ENCODE measurements at regions of chr20 and their contacts with region 1.

Region 1: GRCh38 chr20:63009045-63009961 is 2.5 kb upstream of the BHLHE23 start:
- DNase-seq: peak; percentile 78 to 93 (median 85)
- ATAC-seq: peak; percentile 63
- H3K4me3 ChIP-seq: peak overlapping the region; percentile 54 to 55
- H3K4me3 Mint-ChIP-seq: peak overlapping the region; percentile 88
- H3K27ac ChIP-seq: no peak overlapping the region
- H3K27ac Mint-ChIP-seq: no peak overlapping the region
- H3K4me1 ChIP-seq: peaks cover 53% of the 10 kb centered on the region
- H3K4me1 Mint-ChIP-seq: peaks cover 25% of the 10 kb centered on the region
- H3K27me3 ChIP-seq: peaks cover 33 to 45% of the 10 kb centered on the region in 2 experiments
- H3K27me3 Mint-ChIP-seq: peaks cover 23% of the 10 kb centered on the region
- CTCF ChIP-seq: peak; percentile 91

Region 2: DNA sequence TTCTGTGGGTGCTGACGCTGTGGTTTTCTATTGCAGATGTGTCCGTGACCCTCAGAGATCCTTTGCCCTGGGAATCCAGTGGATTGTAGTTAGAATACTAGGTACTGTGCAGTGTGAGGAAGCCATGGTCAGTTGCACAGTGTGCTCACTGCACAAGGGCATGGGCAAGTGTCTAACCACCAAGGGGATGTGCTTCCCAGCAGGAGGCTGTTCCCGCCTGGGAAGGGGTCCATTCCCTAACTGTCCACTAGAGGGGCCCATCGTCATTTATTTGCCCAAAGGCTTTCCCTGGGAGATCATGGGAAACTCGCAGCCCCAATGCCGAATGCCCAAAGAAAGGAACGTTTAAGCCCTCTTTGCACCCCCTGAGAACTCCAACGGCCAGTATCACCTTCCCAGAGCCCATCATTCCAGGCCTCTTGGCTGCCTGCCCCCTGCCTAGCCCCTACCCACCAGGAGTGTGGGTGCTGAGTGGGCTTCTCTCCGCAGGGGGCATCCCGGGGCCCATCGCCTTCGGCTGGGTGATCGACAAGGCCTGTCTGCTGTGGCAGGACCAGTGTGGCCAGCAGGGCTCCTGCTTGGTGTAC is 340.8 kb before region 1 on chr20:
- CTCF ChIA-PET with region 1: no interaction called
- POLR2A ChIA-PET with region 1: no interaction called
- intact Hi-C with region 1: loop called in 1 of 2 experiments (anchors 5 kb)
- DNase-seq: peak in 7 of 9 experiments; percentile 11 to 67 (median 49)
- ATAC-seq: peak; percentile 53
- H3K4me3 ChIP-seq: no peak overlapping the region
- H3K4me3 Mint-ChIP-seq: no peak overlapping the region
- H3K27ac ChIP-seq: no peak overlapping the region
- H3K27ac Mint-ChIP-seq: no peak overlapping the region
- H3K4me1 ChIP-seq: no peaks in the 10 kb centered on the region
- H3K4me1 Mint-ChIP-seq: no peaks in the 10 kb centered on the region
- H3K27me3 ChIP-seq: no peaks in the 10 kb centered on the region
- H3K27me3 Mint-ChIP-seq: no peaks in the 10 kb centered on the region
- CTCF ChIP-seq: peak; percentile 52

Region 3: GRCh38 chr20:62900052-62900691 is 109.1 kb before region 1 on chr20:
- CTCF ChIA-PET with region 1: interaction called, 60 read pairs
- POLR2A ChIA-PET with region 1: no interaction called
- intact Hi-C with region 1: loop called (anchors 1 kb)
- DNase-seq: peak; percentile 62 to 88 (median 81)
- ATAC-seq: peak; percentile 93
- H3K4me3 ChIP-seq: no peak overlapping the region
- H3K4me3 Mint-ChIP-seq: peak overlapping the region; percentile 29
- H3K27ac ChIP-seq: peak overlapping the region; percentile 17 to 33
- H3K27ac Mint-ChIP-seq: peak overlapping the region; percentile 90
- H3K4me1 ChIP-seq: peaks cover 23% of the 10 kb centered on the region
- H3K4me1 Mint-ChIP-seq: peaks cover 30% of the 10 kb centered on the region
- H3K27me3 ChIP-seq: no peaks in the 10 kb centered on the region
- H3K27me3 Mint-ChIP-seq: no peaks in the 10 kb centered on the region
- CTCF ChIP-seq: peak; percentile 93

Region 4: GRCh38 chr20:62914970-62915457 is 94.3 kb before region 1 on chr20:
- CTCF ChIA-PET with region 1: interaction called, 10 read pairs
- POLR2A ChIA-PET with region 1: interaction called, 4 read pairs
- intact Hi-C with region 1: loop called in 1 of 2 experiments (anchors 5 kb)
- DNase-seq: peak in 3 of 9 experiments; percentile 22 to 65 (median 43)
- ATAC-seq: no peak
- H3K4me3 ChIP-seq: peak overlapping the region in 1 of 2 experiments; percentile 4
- H3K4me3 Mint-ChIP-seq: peak overlapping the region; percentile 74
- H3K27ac ChIP-seq: peak overlapping the region; percentile 12 to 17
- H3K27ac Mint-ChIP-seq: peak overlapping the region; percentile 93
- H3K4me1 ChIP-seq: peaks cover 71% of the 10 kb centered on the region
- H3K4me1 Mint-ChIP-seq: peaks cover 81% of the 10 kb centered on the region
- H3K27me3 ChIP-seq: no peaks in the 10 kb centered on the region
- H3K27me3 Mint-ChIP-seq: no peaks in the 10 kb centered on the region
- CTCF ChIP-seq: no peak

Region 5: GRCh38 chr20:62972270-62973032 is 36.9 kb before region 1 on chr20:
- CTCF ChIA-PET with region 1: interaction called, 7 read pairs
- POLR2A ChIA-PET with region 1: interaction called, 13 read pairs
- intact Hi-C with region 1: loop called (anchors 1 kb)
- DNase-seq: peak; percentile 75 to 88 (median 86)
- ATAC-seq: peak; percentile 99
- H3K4me3 ChIP-seq: peak overlapping the region in 1 of 2 experiments; percentile 36
- H3K4me3 Mint-ChIP-seq: peak overlapping the region; percentile 79
- H3K27ac ChIP-seq: no peak overlapping the region
- H3K27ac Mint-ChIP-seq: peak overlapping the region; percentile 42
- H3K4me1 ChIP-seq: peaks cover 18% of the 10 kb centered on the region
- H3K4me1 Mint-ChIP-seq: peaks cover 23% of the 10 kb centered on the region
- H3K27me3 ChIP-seq: peaks cover 16 to 48% of the 10 kb centered on the region in 2 experiments
- H3K27me3 Mint-ChIP-seq: peaks cover 45% of the 10 kb centered on the region
- CTCF ChIP-seq: peak; percentile 84

Region 6: GRCh38 chr20:63134201-63134612 is 124.9 kb after region 1 on chr20:
- CTCF ChIA-PET with region 1: no interaction called
- POLR2A ChIA-PET with region 1: no interaction called
- intact Hi-C with region 1: no loop called
- DNase-seq: peak in 2 of 9 experiments; percentile 20 to 24
- ATAC-seq: peak; percentile 48
- H3K4me3 ChIP-seq: no peak overlapping the region
- H3K4me3 Mint-ChIP-seq: no peak overlapping the region
- H3K27ac ChIP-seq: no peak overlapping the region
- H3K27ac Mint-ChIP-seq: no peak overlapping the region
- H3K4me1 ChIP-seq: no peaks in the 10 kb centered on the region
- H3K4me1 Mint-ChIP-seq: no peaks in the 10 kb centered on the region
- H3K27me3 ChIP-seq: no peaks in the 10 kb centered on the region
- H3K27me3 Mint-ChIP-seq: peaks cover 22% of the 10 kb centered on the region
- CTCF ChIP-seq: no peak

Measured in CD8-positive, alpha-beta T cell (primary cell).